Caco-2 (cell line): ENCODE measurements at regions of chr10 and their contacts with region 1.

Region 1: GRCh38 chr10:8053446-8054290 is 820 bp upstream of the GATA3 start:
- DNase-seq: peak; percentile 93 to 98
- H3K4me3 ChIP-seq: peak overlapping the region; percentile 68
- H3K4me3 Mint-ChIP-seq: peak overlapping the region; percentile 87
- H3K27ac Mint-ChIP-seq: peak overlapping the region; percentile 87
- H3K4me1 ChIP-seq: peaks cover 27% of the 10 kb centered on the region
- H3K4me1 Mint-ChIP-seq: peaks cover 29% of the 10 kb centered on the region
- H3K27me3 ChIP-seq: no peaks in the 10 kb centered on the region
- H3K27me3 Mint-ChIP-seq: no peaks in the 10 kb centered on the region
- CTCF ChIP-seq: peak; percentile 96 to 98

Region 2: GRCh38 chr10:7857262-7857661 is 196.4 kb before region 1 on chr10:
- CTCF ChIA-PET with region 1: no interaction called
- POLR2A ChIA-PET with region 1: no interaction called
- intact Hi-C with region 1: loop called (anchors 5 kb)
- DNase-seq: peak in 1 of 2 experiments; percentile 24
- H3K4me3 ChIP-seq: no peak overlapping the region
- H3K4me3 Mint-ChIP-seq: peak overlapping the region; percentile 60
- H3K27ac Mint-ChIP-seq: peak overlapping the region; percentile 81
- H3K4me1 ChIP-seq: peaks cover 62% of the 10 kb centered on the region
- H3K4me1 Mint-ChIP-seq: peaks cover 49% of the 10 kb centered on the region
- H3K27me3 ChIP-seq: no peaks in the 10 kb centered on the region
- H3K27me3 Mint-ChIP-seq: no peaks in the 10 kb centered on the region
- CTCF ChIP-seq: no peak

Region 3: DNA sequence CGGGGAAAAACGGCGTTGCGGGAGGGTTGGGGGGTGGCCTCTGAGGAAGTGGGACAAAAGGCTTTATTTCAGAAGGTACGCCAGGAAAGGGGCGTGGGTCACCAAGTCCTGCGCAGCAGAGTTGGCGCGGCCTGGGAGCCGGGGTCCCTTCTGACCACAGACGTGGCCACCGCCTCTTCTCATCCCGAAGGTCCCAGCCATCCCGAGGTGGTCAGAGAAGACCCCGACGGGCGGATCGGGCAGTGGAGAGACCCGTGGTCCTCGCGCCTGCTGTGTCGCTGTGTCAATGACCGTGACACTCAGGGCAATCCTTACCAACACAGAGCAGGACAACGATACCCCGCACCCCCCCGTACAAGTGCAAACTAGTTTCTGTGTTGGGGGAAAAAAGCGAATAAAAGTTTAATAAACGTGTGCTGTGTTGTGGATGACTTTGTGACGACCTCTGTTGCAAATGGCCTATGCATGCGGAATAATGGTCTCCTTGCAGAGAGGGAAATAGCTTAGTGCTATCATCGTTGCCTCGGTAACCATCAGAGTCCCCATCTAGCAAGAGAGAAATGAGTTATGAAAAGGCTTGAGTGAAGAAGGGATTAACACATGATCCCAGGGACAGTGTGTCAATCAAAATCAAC is 18.5 kb before region 1 on chr10:
- CTCF ChIA-PET with region 1: no interaction called
- POLR2A ChIA-PET with region 1: interaction called, 10 read pairs
- intact Hi-C with region 1: loop called (anchors 1 kb)
- DNase-seq: no peak
- H3K4me3 ChIP-seq: no peak overlapping the region
- H3K4me3 Mint-ChIP-seq: no peak overlapping the region
- H3K27ac Mint-ChIP-seq: no peak overlapping the region
- H3K4me1 ChIP-seq: peaks cover 28% of the 10 kb centered on the region
- H3K4me1 Mint-ChIP-seq: peaks cover 26% of the 10 kb centered on the region
- H3K27me3 ChIP-seq: no peaks in the 10 kb centered on the region
- H3K27me3 Mint-ChIP-seq: peaks cover 4% of the 10 kb centered on the region
- CTCF ChIP-seq: no peak

Region 4: DNA sequence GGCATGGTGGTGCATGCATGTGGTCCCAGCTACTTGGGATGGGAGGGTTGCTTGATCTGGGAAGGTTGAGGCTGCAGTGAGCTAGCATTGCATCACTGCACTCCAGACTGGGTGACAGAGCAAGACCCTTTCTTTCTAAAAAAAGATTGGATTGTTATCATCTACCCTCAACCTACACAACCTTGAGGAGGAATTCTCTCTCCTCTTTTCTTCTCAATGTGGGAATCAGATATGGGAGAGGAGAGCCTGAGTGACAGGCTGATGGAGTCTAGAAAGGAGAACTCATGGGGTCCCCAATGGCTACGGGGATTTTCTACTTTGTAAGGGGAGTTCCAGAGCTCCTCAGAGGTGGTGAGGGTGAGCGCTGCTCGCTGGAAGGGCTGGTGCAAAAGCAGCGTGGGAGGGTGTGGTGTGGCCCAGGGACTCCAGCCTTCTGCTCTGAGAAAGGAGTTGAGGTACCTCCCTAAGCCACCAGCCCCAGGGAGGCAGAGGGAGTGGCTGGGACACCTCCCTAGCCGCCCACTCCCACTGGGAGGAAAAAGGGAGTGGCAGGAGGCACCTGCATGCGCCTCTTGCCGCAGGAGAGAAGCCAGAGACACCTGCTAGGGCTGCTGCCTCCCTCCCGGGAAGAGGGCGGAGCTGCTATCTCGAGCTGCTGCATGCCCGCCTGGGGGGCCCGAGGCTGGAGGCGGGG is 49.2 kb after region 1 on chr10:
- CTCF ChIA-PET with region 1: interaction called, 4 read pairs
- POLR2A ChIA-PET with region 1: no interaction called
- intact Hi-C with region 1: loop called (anchors 1 kb)
- DNase-seq: peak; percentile 91 to 93
- H3K4me3 ChIP-seq: peak overlapping the region; percentile 21
- H3K4me3 Mint-ChIP-seq: peak overlapping the region; percentile 75
- H3K27ac Mint-ChIP-seq: peak overlapping the region; percentile 90
- H3K4me1 ChIP-seq: peaks cover 49% of the 10 kb centered on the region
- H3K4me1 Mint-ChIP-seq: peaks cover 38% of the 10 kb centered on the region
- H3K27me3 ChIP-seq: no peaks in the 10 kb centered on the region
- H3K27me3 Mint-ChIP-seq: no peaks in the 10 kb centered on the region
- CTCF ChIP-seq: no peak

Region 5: GRCh38 chr10:8296090-8296733 is 242.5 kb after region 1 on chr10:
- CTCF ChIA-PET with region 1: no interaction called
- POLR2A ChIA-PET with region 1: no interaction called
- intact Hi-C with region 1: no loop called
- DNase-seq: peak; percentile 40 to 60
- H3K4me3 ChIP-seq: no peak overlapping the region
- H3K4me3 Mint-ChIP-seq: no peak overlapping the region
- H3K27ac Mint-ChIP-seq: no peak overlapping the region
- H3K4me1 ChIP-seq: peaks cover 7% of the 10 kb centered on the region; the same call in 1 of the 2 replicates
- H3K4me1 Mint-ChIP-seq: no peaks in the 10 kb centered on the region
- H3K27me3 ChIP-seq: no peaks in the 10 kb centered on the region
- H3K27me3 Mint-ChIP-seq: no peaks in the 10 kb centered on the region
- CTCF ChIP-seq: no peak

Region 6: DNA sequence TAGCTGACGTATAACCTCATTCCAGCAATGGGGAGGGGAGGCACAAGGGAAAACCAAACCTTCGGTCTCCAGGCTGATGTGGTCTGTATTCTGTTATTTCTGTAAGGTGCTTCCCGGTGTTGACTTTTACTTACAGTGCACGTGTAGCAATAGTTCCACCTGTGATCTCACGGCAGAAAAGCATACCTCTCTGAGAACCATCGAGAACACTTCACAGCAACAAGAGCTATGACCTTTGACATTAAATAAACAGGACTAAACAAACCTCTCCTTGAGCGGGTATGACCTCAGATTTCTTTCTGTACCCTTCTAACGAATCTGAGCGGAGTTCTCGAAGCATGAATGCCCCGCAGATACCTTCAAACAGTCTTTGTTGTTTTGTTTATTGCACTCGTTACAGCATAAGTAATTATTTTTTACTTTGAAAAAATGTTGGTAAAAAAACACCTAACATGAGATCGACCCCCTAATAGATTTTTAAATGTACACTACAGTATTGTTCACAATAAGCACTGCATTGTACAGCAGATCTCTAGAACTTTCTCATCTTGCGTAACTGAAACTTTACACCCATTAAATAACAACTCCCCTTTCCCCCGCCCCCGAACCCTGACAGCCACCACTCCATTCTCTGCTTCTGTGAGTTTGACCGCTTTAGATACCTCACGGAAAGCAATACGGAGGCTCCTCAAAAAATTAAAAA is 283.1 kb after region 1 on chr10:
- CTCF ChIA-PET with region 1: interaction called, 3 read pairs
- POLR2A ChIA-PET with region 1: no interaction called
- intact Hi-C with region 1: loop called (anchors 5 kb)
- DNase-seq: peak; percentile 52 to 56
- H3K4me3 ChIP-seq: 0 out of 2 replicates have a peak overlapping the region, but pooled peaks have one; percentile 8
- H3K4me3 Mint-ChIP-seq: peak overlapping the region; percentile 61
- H3K27ac Mint-ChIP-seq: peak overlapping the region; percentile 55
- H3K4me1 ChIP-seq: peaks cover 8% of the 10 kb centered on the region; the same call in 1 of the 2 replicates
- H3K4me1 Mint-ChIP-seq: peaks cover 14% of the 10 kb centered on the region
- H3K27me3 ChIP-seq: no peaks in the 10 kb centered on the region
- H3K27me3 Mint-ChIP-seq: no peaks in the 10 kb centered on the region
- CTCF ChIP-seq: no peak

Region 7: DNA sequence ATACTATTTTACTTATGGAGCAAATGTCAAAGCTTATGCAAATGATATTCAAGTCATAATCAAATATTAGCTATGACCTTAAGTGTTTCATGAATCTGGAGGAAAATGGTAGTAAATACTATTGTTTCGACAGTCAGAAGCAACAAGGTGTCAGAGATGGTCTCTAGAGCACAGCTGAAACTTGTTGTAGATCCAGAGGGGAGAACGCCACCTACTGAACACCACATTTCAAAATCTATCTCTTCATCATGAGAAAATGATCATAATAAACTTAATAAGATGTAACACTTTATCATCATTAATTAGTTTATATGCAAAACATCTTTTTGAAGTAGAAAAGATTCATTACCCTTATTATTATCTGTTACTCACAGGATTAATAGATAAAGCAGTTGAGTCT is 419.5 kb after region 1 on chr10:
- CTCF ChIA-PET with region 1: no interaction called
- POLR2A ChIA-PET with region 1: no interaction called
- intact Hi-C with region 1: loop called (anchors 1 kb)
- DNase-seq: peak in 1 of 2 experiments; percentile 30
- H3K4me3 ChIP-seq: no peak overlapping the region
- H3K4me3 Mint-ChIP-seq: no peak overlapping the region
- H3K27ac Mint-ChIP-seq: no peak overlapping the region
- H3K4me1 ChIP-seq: no peaks in the 10 kb centered on the region
- H3K4me1 Mint-ChIP-seq: no peaks in the 10 kb centered on the region
- H3K27me3 ChIP-seq: no peaks in the 10 kb centered on the region
- H3K27me3 Mint-ChIP-seq: no peaks in the 10 kb centered on the region
- CTCF ChIP-seq: peak in 1 of 2 experiments; percentile 53

Region 8: GRCh38 chr10:9209105-9209798 is 1155.6 kb after region 1 on chr10:
- CTCF ChIA-PET with region 1: no interaction called
- POLR2A ChIA-PET with region 1: no interaction called
- intact Hi-C with region 1: loop called (anchors 5 kb)
- DNase-seq: peak; percentile 63 to 77
- H3K4me3 ChIP-seq: no peak overlapping the region
- H3K4me3 Mint-ChIP-seq: no peak overlapping the region
- H3K27ac Mint-ChIP-seq: no peak overlapping the region
- H3K4me1 ChIP-seq: no peaks in the 10 kb centered on the region
- H3K4me1 Mint-ChIP-seq: peaks cover 6% of the 10 kb centered on the region
- H3K27me3 ChIP-seq: no peaks in the 10 kb centered on the region; the same call in 1 of the 2 replicates
- H3K27me3 Mint-ChIP-seq: peaks cover 3% of the 10 kb centered on the region
- CTCF ChIP-seq: peak; percentile 89 to 96